A673 (cell line): ENCODE measurements at regions of chr19 and their contacts with region 1.

Region 1: DNA sequence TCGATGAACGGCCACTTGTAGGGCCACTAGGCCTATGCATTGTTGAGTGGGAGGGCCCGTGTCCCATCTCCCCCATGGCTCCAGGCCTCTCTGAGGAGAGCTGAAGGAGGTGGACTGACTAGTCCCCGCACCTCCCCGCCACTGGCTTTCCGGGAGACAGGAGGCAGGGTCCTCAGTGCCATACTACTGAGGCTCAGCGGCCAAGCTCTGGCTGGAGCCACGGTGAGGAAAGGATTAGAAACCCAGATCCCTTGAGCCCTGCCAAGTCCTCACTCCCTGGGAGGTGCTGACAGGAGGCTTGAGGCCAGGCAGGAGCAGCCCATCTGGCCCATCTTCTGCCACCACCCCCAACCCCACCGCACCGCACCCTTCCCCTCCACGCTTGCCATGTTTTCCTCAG is 29.0 kb downstream of the CCDC8 start:
- DNase-seq: no peak
- H3K4me3 ChIP-seq: no peak overlapping the region
- H3K27ac ChIP-seq: no peak overlapping the region
- H3K4me1 ChIP-seq: peaks cover 7% of the 10 kb centered on the region
- H3K27me3 ChIP-seq: no peaks in the 10 kb centered on the region
- CTCF ChIP-seq: no peak

Region 2: GRCh38 chr19:46303691-46304397 is 80.6 kb before region 1 on chr19:
- CTCF ChIA-PET with region 1: no interaction called
- POLR2A ChIA-PET with region 1: no interaction called
- intact Hi-C with region 1: no loop called
- DNase-seq: peak; percentile 70
- H3K4me3 ChIP-seq: no peak overlapping the region
- H3K27ac ChIP-seq: peak overlapping the region; percentile 44
- H3K4me1 ChIP-seq: peaks cover 29% of the 10 kb centered on the region
- H3K27me3 ChIP-seq: no peaks in the 10 kb centered on the region
- CTCF ChIP-seq: no peak

Region 3: GRCh38 chr19:46495787-46496101 is 111.3 kb after region 1 on chr19 and contains the start of gene PNMA8B:
- CTCF ChIA-PET with region 1: no interaction called
- POLR2A ChIA-PET with region 1: interaction called, 15 read pairs
- intact Hi-C with region 1: no loop called
- DNase-seq: peak; percentile 88
- H3K4me3 ChIP-seq: peak within 1 kb of the TSS; percentile 49
- H3K27ac ChIP-seq: peak within 1 kb of the TSS; percentile 54
- H3K4me1 ChIP-seq: peaks cover 7% of the 10 kb centered on the region
- H3K27me3 ChIP-seq: no peaks in the 10 kb centered on the region
- CTCF ChIP-seq: no peak
- total RNA-seq, gene PNMA8B: 0.75 and 0.81 TPM in 2 replicates